Right ventricle myocardium superior (tissue), 1 donor: ENCODE measurements at regions of chr9 and their contacts with region 1.

Region 1: GRCh38 chr9:111896353-111896958 is at the start of gene UGCG:
- DNase-seq: peak; percentile 94
- ATAC-seq: peak; percentile 99
- total RNA-seq, gene UGCG: 11.7 TPM

Region 2: DNA sequence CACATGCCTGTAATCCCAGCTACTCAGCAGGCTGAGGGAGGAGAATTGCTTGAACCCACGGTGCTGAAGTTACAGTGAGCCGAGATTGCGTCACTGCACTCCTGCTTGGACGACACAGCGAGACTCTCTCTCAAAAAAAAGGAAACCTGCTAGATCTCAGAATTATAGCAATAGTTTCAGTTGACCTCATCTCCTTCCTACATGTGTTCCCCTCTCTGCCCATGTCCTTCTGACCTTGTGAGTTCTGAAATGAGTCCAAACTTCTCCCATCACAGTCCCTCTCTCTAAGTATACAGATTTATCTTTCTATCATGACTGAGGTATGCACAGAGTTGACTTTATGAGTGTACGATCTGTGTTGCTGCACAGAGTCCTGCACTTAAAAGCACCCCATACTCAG is 57.1 kb before region 1 on chr9:
- intact Hi-C with region 1: loop called (anchors 10 kb)
- DNase-seq: peak; percentile 45
- ATAC-seq: no peak

Region 3: DNA sequence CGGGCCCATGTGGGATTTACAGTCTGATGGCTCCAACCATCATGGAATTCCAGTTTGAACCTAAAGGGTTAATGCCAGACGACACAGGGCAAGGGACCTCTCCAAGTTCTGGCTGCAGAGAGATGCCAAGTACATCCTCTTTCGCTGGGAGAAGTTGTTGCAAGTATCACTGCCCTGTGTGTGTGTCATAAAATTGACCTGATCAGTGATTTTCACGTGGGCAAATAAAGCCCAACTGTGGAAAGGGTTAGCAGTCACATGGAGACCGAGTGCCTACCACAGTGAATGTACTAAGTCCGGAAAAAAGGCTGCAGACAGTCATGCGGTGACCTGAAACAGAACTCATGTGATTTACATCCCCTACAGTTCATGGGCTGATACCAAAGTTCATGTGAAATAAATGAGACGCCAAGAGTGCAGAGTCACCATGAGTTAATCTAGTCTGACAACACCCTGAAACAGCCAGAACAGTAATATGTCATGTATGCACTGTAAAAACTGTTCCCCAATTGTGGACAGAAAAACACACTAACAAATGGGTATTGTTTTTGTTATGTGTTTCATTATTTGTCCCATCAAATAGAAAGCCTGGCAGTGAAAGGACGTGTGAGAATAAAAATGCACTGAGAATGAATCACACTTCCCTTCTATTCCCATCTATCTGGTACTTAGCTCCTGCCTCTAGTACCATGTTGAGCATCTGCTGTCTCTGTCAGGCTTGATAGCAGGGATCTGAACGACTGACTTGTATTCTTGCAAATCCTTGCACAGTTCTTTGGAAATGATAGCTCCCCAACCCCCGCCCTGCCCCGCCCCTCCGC is 162.9 kb after region 1 on chr9:
- intact Hi-C with region 1: loop called (anchors 5 kb)
- DNase-seq: no peak
- ATAC-seq: peak; percentile 40